SK-N-SH (cell line): ENCODE measurements at regions of chr4 and their contacts with region 1.

Region 1: GRCh38 chr4:80184053-80184790 is 13.1 kb upstream of the PRDM8 start:
- DNase-seq: peak; percentile 88
- H3K4me3 ChIP-seq: peak overlapping the region; percentile 62 to 70
- H3K27ac ChIP-seq: peak overlapping the region; percentile 34 to 66; a peak in 3 of 4 replicates
- H3K4me1 ChIP-seq: peaks cover 0 to 7% of the 10 kb centered on the region in 2 experiments; a peak in 1 of 4 replicates
- H3K27me3 ChIP-seq: no peaks in the 10 kb centered on the region
- CTCF ChIP-seq: peak; percentile 70
- EP300 ChIP-seq: no peak
- RAD21 ChIP-seq: peak; percentile 66

Region 2: GRCh38 chr4:80196922-80197573 is 12.8 kb after region 1 on chr4 and contains the start of gene PRDM8:
- CTCF ChIA-PET with region 1: interaction called, 54 read pairs
- POLR2A ChIA-PET with region 1: no interaction called
- DNase-seq: peak; percentile 88
- H3K4me3 ChIP-seq: peak within 1 kb of the TSS; percentile 70 to 76
- H3K27ac ChIP-seq: peak within 1 kb of the TSS; percentile 25 to 81; a peak in 3 of 4 replicates
- H3K4me1 ChIP-seq: peaks cover 0 to 23% of the 10 kb centered on the region in 2 experiments; a peak in 2 of 4 replicates
- H3K27me3 ChIP-seq: no peaks in the 10 kb centered on the region
- CTCF ChIP-seq: no peak
- EP300 ChIP-seq: 0 out of 4 replicates have a peak, but pooled peaks of 1 of the 2 experiments have one; percentile 37
- RAD21 ChIP-seq: peak; percentile 14; the same call in 1 of the 2 replicates
- polyA plus RNA-seq, gene PRDM8: 3.5 and 3.7 TPM in 2 replicates